ENCODE measurements at regions of chr7 and their contacts with region 1.

Region 1: DNA sequence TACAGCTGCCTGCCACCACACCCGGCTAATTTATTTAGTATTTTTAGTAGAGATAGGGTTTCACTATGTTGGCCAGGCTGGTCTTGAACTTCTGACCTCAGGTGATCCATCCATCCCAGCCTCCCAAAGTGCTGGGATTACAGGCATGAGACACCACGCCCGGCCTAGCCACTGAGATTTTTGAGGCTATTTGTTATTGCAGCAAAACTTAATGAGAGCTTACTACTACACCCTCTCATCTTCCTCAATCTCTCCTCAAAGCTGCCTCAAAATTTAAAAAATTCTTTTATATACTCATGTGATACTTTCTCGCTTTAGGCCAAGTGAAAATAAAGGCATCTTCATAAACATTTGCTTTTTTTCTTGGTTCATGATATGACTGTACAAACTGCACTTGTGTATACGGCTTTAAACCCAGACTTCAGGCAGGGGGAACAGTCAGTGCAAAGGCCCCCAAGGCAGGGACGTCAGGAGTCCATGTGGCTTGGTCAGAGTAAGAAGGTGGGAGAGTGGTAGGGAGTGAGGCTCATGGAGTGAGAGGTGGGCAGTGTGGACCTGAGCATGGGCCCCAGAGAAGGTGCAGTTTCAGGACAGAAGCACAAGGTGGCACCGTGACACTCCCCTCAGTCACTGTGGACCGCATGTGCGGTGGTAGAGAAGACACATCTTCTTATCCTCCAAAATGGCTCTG is 55.5 kb downstream of the SYPL1 start:
- DNase-seq: peak; percentile 55
- ATAC-seq: peak; percentile 53
- H3K4me3 Mint-ChIP-seq: peak overlapping the region; percentile 71
- H3K27ac Mint-ChIP-seq: peak overlapping the region; percentile 99
- H3K4me1 Mint-ChIP-seq: peaks cover 65% of the 10 kb centered on the region
- H3K27me3 Mint-ChIP-seq: no peaks in the 10 kb centered on the region
- CTCF ChIP-seq: peak; percentile 65

Region 2: DNA sequence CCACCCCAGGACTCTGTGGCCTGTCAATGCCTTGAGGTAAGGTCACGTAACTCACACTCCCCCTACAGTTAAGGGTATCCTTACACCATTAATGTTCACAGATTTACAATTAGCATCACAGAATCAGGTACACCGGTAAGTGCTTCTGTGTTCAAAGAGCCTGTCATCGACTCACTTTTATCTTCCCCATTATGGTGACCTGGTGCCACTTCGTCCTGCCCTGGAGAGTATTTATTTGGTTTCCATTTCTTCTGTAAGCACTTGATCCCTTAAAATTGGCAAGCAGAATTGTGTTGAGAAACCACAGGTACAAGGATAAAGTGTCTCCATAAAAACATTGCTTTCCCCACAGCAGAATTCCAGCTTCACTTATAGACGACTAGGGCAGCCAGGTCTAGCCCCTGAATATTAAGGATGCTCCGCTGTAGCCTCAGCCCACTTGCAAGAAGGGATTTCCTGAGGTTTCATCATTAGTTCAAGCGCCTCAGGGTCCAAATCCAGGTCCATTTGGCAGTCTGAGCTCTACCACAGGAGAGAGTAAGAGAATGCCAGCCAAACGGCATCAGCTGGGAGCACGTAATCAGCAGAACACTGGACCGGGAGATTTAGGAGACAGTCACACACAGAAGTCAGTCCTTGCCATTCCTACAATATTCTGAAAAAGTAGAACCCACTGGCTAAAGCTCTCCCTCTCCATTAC is 190.4 kb before region 1 on chr7:
- CTCF ChIA-PET with region 1: no interaction called
- POLR2A ChIA-PET with region 1: no interaction called
- intact Hi-C with region 1: no loop called
- DNase-seq: no peak
- ATAC-seq: no peak
- H3K4me3 Mint-ChIP-seq: no peak overlapping the region
- H3K27ac Mint-ChIP-seq: no peak overlapping the region
- H3K4me1 Mint-ChIP-seq: no peaks in the 10 kb centered on the region
- H3K27me3 Mint-ChIP-seq: no peaks in the 10 kb centered on the region
- CTCF ChIP-seq: no peak

Region 3: GRCh38 chr7:106071356-106071998 is 14.8 kb after region 1 on chr7:
- CTCF ChIA-PET with region 1: interaction called, 152 read pairs
- POLR2A ChIA-PET with region 1: interaction called, 402 read pairs
- intact Hi-C with region 1: loop called (anchors 1 kb)
- DNase-seq: peak; percentile 57
- ATAC-seq: peak; percentile 87
- H3K4me3 Mint-ChIP-seq: peak overlapping the region; percentile 73
- H3K27ac Mint-ChIP-seq: peak overlapping the region; percentile 98
- H3K4me1 Mint-ChIP-seq: peaks cover 100% of the 10 kb centered on the region
- H3K27me3 Mint-ChIP-seq: no peaks in the 10 kb centered on the region
- CTCF ChIP-seq: no peak

Region 4: DNA sequence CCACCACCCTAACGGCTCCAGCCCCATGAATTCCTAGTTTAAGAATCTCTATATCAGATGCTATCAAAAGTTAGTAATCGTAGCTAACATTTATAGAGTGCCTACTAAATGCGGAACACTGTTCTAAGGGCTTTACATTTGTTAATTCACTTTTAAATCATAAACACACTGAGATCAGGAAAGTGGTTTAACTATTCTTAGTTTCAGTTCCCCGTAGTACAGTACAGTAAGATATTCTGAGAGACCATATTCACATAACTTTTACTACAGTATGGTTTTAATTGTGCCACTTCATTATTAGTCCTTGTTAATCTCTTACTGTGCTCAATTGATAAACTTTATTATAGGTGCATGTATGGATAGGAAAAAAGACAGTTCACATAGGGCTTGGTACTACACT is 33.0 kb after region 1 on chr7:
- CTCF ChIA-PET with region 1: interaction called, 62 read pairs
- POLR2A ChIA-PET with region 1: interaction called, 39 read pairs
- intact Hi-C with region 1: loop called (anchors 1 kb)
- DNase-seq: no peak
- ATAC-seq: peak; percentile 88
- H3K4me3 Mint-ChIP-seq: peak overlapping the region; percentile 65
- H3K27ac Mint-ChIP-seq: peak overlapping the region; percentile 83
- H3K4me1 Mint-ChIP-seq: peaks cover 82% of the 10 kb centered on the region
- H3K27me3 Mint-ChIP-seq: no peaks in the 10 kb centered on the region
- CTCF ChIP-seq: no peak

Region 5: GRCh38 chr7:106100863-106101629 is 44.4 kb after region 1 on chr7:
- CTCF ChIA-PET with region 1: interaction called, 62 read pairs
- POLR2A ChIA-PET with region 1: interaction called, 351 read pairs
- intact Hi-C with region 1: no loop called
- DNase-seq: no peak
- ATAC-seq: no peak
- H3K4me3 Mint-ChIP-seq: peak overlapping the region; percentile 2
- H3K27ac Mint-ChIP-seq: peak overlapping the region; percentile 83
- H3K4me1 Mint-ChIP-seq: peaks cover 82% of the 10 kb centered on the region
- H3K27me3 Mint-ChIP-seq: no peaks in the 10 kb centered on the region
- CTCF ChIP-seq: no peak

Region 6: DNA sequence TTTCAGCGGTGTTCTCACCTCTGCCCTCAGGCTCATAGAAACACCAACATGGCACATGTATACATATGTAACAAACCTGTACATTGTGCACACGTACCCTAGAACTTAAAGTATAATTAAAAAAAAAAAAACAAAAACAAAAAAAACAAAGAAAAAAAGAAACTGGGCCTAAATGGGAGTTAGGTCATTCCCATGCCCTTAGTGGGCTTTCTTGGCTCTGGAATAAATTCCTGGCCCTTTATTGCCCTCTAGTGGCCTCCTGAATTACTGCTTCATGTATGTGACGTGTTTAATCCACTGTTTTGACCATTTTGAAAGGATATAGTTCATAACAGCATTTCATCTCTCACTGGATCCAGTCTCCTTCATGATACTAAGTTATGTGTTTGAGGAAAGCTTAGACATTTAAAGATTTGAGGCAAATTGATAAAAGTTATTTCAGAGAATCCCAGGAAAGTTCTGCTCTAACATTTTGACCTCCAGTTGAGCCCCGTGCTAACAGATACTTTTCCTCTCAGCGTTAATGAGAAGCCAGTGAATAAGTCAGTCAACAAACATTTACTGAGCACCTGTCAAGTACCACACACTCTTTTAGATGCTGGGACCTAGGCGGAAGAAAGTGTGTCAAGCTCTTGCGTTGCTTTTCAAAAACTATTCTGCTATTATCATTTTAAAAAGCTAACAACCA is 110.1 kb after region 1 on chr7:
- CTCF ChIA-PET with region 1: interaction called, 19 read pairs
- POLR2A ChIA-PET with region 1: interaction called, 7 read pairs
- intact Hi-C with region 1: loop called (anchors 1 kb)
- DNase-seq: no peak
- ATAC-seq: peak; percentile 54
- H3K4me3 Mint-ChIP-seq: no peak overlapping the region
- H3K27ac Mint-ChIP-seq: no peak overlapping the region
- H3K4me1 Mint-ChIP-seq: peaks cover 10% of the 10 kb centered on the region
- H3K27me3 Mint-ChIP-seq: peaks cover 2% of the 10 kb centered on the region
- CTCF ChIP-seq: peak; percentile 77

Region 7: DNA sequence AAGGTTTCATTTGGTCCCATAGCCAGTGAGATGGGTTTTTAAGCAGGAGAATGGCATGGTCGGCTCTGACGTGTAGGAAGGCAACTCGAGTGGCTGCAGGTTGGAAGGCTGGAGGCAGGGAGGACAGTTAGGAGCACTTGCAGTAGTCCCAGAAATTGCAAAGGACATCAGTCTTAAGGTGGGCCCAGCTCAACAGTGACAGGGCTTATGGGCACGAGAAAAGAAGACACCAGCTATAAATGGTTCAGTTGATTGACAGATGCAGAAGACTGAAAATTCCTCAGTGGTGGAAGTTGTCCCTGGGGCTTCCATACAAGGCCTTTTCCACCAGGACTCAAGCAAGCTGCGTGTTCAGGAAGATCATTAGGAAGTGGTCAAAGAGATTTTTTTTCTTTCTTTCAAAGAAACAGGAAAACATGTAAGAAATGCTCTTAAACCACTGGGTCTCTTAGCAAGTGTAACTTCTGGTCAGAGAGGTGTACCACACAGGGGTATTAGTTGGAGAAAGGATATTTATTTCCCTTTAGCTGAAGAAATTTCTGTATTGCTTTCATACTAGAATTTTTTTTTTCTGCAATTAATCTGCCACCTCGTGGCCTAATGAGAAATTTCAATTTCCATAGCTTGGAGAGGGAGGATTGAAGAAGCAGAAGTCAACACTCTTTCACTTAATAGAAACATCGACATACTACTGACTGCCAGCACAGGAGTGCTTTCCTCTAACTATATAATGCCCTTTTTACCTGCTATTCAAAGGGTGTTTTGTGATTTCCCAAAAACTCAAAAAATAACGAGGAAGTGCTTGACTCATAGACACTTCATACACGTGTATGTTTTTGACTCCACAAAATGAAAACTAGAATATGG is 405.6 kb after region 1 on chr7:
- CTCF ChIA-PET with region 1: interaction called, 3 read pairs
- POLR2A ChIA-PET with region 1: no interaction called
- intact Hi-C with region 1: loop called (anchors 5 kb)
- DNase-seq: no peak
- ATAC-seq: peak; percentile 62
- H3K4me3 Mint-ChIP-seq: no peak overlapping the region
- H3K27ac Mint-ChIP-seq: no peak overlapping the region
- H3K4me1 Mint-ChIP-seq: peaks cover 14% of the 10 kb centered on the region
- H3K27me3 Mint-ChIP-seq: no peaks in the 10 kb centered on the region
- CTCF ChIP-seq: no peak